ENCODE measurements at regions of chr9 and their contacts with region 1.

Region 1: GRCh38 chr9:73023025-73023541 is 70.2 kb upstream of the ALDH1A1 start:
- DNase-seq: peak; percentile 79
- H3K4me3 Mint-ChIP-seq: no peak overlapping the region
- H3K27ac Mint-ChIP-seq: no peak overlapping the region
- H3K4me1 Mint-ChIP-seq: peaks cover 7% of the 10 kb centered on the region
- H3K27me3 Mint-ChIP-seq: peaks cover 23% of the 10 kb centered on the region

Region 2: GRCh38 chr9:72856972-72857623 is 166.0 kb before region 1 on chr9:
- intact Hi-C with region 1: loop called (anchors 5 kb)
- DNase-seq: no peak
- H3K4me3 Mint-ChIP-seq: no peak overlapping the region
- H3K27ac Mint-ChIP-seq: no peak overlapping the region
- H3K4me1 Mint-ChIP-seq: no peaks in the 10 kb centered on the region
- H3K27me3 Mint-ChIP-seq: no peaks in the 10 kb centered on the region

Region 3: DNA sequence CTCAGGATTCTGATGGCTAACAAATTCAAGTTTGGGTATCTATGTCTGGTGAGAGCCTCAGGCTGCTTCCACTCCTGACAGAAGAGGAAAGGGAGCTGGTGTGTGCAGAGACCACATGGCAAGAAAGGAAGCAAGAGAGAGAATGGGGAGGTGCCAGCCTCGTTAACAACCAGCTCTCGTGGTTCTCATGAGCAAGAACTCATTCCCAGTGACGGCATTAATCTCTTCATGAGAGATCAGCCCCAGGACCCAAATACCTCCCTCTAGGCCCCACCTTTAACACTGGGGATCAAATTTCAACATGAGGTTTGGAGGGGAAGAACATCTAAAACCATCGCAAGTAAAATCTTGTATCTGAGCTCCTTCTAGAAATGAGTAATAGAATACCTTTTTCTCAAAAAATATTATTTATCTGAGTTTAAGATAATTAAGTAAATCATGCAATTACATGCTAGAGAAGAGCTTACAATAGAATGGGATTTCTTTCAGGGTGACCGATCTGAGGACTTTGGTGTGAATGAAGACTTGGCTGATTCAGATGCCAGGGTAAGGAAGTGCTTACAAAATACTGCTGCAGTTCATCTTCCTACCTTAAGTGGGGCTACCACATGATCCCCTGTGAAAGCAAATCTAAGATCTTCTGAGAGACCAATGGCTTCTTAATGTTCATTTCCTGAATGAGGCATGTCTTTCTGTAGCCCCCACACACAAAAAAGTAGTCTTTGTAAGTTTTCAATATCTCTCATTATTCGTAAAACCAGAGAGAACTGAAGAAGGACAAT is 140.1 kb after region 1 on chr9:
- intact Hi-C with region 1: no loop called
- DNase-seq: peak; percentile 45
- H3K4me3 Mint-ChIP-seq: no peak overlapping the region
- H3K27ac Mint-ChIP-seq: no peak overlapping the region
- H3K4me1 Mint-ChIP-seq: peaks cover 17% of the 10 kb centered on the region
- H3K27me3 Mint-ChIP-seq: no peaks in the 10 kb centered on the region

Measured in activated CD4-positive, alpha-beta T cell treated with anti-CD3 and anti-CD28 coated beads, Interleukin-2, amount 10 ng/mL, durations not matched to agents 24 days and 14 days (primary cell).